ENCODE measurements at regions of chr11 and their contacts with region 1.

Region 1: DNA sequence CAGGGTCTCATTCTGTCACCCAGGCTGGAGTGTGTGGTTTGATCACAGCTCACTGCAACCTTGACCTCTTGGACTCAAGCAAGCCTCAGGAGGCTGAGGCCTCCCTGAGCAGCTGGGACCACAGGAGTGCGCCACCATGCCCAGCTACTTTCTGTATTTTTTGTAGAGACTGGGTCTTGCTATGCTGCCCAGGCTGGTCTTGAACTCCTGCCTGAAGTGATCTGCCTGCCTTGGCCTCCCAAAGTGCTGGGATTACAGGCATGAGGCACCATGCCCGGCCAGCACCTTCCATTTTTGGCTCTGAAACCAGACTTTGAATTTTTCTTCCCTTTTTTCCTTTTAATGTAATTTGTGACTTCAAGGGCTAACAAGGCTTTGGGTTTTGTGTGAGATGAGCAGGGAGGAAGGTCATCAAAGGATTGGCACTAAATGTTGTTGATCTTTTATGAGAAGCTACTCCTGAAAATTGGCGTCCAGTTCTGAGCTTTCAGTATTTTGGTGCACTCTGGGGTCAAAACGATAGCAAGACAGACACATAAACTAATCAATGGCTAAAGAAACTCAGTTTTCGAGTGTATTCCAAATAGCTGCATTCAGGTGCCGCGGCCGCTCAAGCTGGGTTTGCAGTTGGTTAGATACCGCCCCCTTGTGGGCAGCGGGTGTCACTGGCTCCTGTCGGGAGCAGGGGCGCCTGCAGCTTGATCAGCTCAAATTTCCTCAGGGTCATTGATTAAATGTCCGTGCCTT is 51.9 kb upstream of the CLMP start:
- DNase-seq: peak; percentile 77 to 80 (median 79)
- ATAC-seq: peak; percentile 95 to 99 (median 98)
- H3K4me3 ChIP-seq: no peak overlapping the region
- H3K27ac ChIP-seq: no peak overlapping the region
- H3K4me1 ChIP-seq: no peaks in the 10 kb centered on the region
- H3K27me3 ChIP-seq: no peaks in the 10 kb centered on the region
- CTCF ChIP-seq: peak; percentile 91 to 100 (median 98)
- POLR2A ChIP-seq: no peak

Region 2: DNA sequence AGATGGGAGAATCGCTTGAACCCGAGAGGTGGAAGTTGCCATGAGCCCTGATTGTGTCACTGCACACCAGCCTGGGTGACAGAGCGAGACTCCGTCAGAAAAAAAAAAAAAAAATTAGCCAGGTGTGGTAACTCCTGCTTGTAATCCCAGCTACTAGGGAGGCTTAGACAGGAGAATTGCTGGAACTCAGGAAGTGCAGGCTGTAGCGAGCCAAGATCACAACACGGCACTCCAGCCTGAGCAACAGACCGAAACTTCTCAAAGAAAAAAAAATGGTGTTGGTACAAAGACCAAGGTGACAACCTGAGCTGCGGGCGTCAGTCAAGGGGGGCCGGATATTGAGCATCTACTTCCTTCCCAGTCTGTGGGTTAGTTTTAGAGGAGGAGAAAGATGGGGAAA is 136.6 kb before region 1 on chr11:
- intact Hi-C with region 1: loop called (anchors 5 kb)
- DNase-seq: no peak
- ATAC-seq: no peak
- H3K4me3 ChIP-seq: no peak overlapping the region
- H3K27ac ChIP-seq: no peak overlapping the region
- H3K4me1 ChIP-seq: no peaks in the 10 kb centered on the region
- H3K27me3 ChIP-seq: no peaks in the 10 kb centered on the region
- CTCF ChIP-seq: no peak
- POLR2A ChIP-seq: no peak

Region 3: DNA sequence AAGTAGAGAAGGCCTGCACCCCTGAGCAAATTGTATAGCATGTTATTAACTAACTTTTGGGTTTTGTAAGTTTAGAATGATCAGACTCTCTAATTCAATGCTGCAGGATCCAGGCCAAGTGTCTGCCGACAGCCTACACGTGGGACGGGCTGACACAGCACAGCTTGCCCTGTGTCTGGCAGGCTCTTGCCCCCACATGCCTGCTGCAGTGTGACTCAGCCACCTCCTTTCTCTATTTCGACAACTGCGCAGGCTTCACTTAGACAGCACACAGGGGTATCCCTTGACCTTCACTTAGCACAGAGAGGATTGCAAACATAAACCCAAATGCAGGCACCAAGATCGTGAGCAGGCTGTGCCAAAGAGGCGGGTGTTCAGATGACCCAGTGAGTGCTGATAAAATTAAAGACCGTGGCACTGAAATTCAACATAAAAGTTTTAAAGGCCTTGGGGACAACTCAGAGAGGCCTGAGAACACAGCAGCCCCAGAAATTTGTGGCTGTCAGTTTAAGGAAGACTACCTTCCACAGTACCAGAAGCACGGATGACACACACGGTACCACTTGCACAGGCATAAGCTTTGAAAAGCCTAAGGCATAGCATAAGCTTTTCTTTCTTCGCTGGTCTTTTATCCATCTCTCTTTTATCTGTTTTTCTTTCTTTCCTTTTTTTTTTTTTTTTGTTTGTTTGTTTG is 369.7 kb after region 1 on chr11:
- intact Hi-C with region 1: no loop called
- DNase-seq: no peak
- ATAC-seq: peak in 1 of 4 donors; percentile 33
- H3K4me3 ChIP-seq: no peak overlapping the region
- H3K27ac ChIP-seq: no peak overlapping the region
- H3K4me1 ChIP-seq: no peaks in the 10 kb centered on the region
- H3K27me3 ChIP-seq: no peaks in the 10 kb centered on the region
- CTCF ChIP-seq: no peak
- POLR2A ChIP-seq: no peak

Measured in right lobe of liver (tissue), 6 donors.